A673 (cell line): ENCODE measurements at regions of chr3 and their contacts with region 1.

Region 1: DNA sequence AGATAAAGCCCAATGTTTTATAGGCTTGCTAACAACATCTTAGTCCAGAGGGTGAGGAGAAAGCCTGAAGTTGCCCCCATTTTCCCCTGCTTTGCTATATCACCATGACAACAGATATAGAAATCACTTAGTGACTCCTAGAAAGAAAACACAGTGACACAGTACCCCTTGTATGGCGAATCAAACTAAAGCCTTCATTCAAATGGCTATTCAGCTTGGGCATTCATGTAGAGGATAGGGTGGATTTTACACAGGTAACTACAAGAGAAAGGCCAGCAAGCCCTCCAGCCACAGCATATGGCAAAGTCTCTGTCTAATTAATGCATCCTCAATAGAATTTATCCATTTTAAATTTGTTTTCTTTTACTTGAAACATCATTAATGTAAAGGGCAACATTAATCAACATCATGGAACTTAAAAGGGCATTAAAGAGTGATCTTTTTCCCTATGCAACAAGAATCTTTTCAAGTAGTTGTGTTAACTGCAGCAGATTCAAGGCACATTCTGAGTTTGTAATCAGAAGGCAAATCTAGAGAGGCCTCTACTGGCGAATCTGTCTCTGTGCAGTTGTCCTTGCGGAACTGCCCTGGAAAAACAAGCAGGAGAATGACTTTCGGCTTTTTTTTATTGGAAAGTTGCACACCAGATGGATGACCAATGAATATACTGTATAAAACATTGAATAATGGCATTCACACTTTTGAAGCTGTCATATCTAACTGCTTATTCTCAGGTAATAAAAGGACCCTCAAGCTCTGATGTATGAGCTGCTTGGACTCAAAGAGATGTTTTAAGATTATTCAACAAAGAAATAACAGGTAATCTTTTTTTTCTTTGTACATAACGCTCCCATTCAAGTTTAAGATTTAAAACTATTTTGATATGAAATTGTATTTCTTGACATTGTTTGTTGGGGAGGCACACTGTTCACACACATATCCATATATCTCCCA is 621.7 kb upstream of the AGTR1 start:
- DNase-seq: peak; percentile 75
- H3K4me3 ChIP-seq: no peak overlapping the region
- H3K27ac ChIP-seq: no peak overlapping the region
- H3K4me1 ChIP-seq: peaks cover 38% of the 10 kb centered on the region
- H3K27me3 ChIP-seq: no peaks in the 10 kb centered on the region
- CTCF ChIP-seq: peak; percentile 87

Region 2: DNA sequence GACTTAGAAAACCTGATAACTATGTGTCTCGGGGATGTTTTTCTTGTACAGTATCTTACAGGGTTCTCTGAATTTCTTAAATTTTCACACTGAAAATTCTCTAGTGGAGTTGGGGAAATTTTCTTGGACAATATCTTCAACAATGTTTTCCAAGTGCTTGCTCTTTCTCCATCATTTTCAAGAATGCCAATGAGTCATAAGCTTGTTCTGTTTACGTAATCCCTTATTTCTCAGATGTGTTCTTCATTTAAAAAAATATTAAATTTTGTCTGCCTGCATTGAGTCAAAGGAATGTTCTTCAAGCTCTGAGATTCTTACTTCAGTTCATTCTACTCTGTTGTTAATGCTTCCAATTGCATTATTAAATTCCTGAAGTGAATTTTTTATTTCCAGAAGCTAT is 1584.7 kb before region 1 on chr3:
- CTCF ChIA-PET with region 1: no interaction called
- POLR2A ChIA-PET with region 1: no interaction called
- intact Hi-C with region 1: no loop called
- DNase-seq: no peak
- H3K4me3 ChIP-seq: no peak overlapping the region
- H3K27ac ChIP-seq: no peak overlapping the region
- H3K4me1 ChIP-seq: peaks cover 13% of the 10 kb centered on the region
- H3K27me3 ChIP-seq: no peaks in the 10 kb centered on the region
- CTCF ChIP-seq: no peak

Region 3: GRCh38 chr3:146747928-146748327 is 1328.1 kb before region 1 on chr3:
- CTCF ChIA-PET with region 1: interaction called, 3 read pairs
- POLR2A ChIA-PET with region 1: no interaction called
- intact Hi-C with region 1: loop called (anchors 5 kb)
- DNase-seq: peak; percentile 82
- H3K4me3 ChIP-seq: no peak overlapping the region
- H3K27ac ChIP-seq: no peak overlapping the region
- H3K4me1 ChIP-seq: peaks cover 37% of the 10 kb centered on the region
- H3K27me3 ChIP-seq: no peaks in the 10 kb centered on the region
- CTCF ChIP-seq: peak; percentile 76

Region 4: DNA sequence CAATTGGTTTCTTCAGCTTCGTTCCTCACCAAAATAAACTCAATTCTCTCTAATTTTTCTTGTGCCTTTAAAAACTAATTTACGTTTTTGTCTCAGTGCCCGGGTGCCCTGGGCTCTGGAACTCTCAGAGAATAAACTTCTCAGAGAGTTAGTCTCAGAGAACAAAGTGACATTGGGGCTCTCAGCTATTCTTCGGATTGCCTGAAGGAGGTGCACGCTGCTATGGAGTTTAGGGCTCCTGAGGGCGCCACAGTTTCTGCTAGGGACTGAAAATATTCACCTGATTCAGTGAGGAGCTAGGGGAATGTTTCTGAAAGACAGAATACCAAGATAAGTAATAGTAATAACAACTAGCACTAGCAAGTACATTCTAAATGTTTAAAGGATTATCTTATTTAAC is 692.4 kb before region 1 on chr3:
- CTCF ChIA-PET with region 1: no interaction called
- POLR2A ChIA-PET with region 1: no interaction called
- intact Hi-C with region 1: loop called (anchors 5 kb)
- DNase-seq: peak; percentile 51
- H3K4me3 ChIP-seq: no peak overlapping the region
- H3K27ac ChIP-seq: no peak overlapping the region
- H3K4me1 ChIP-seq: peaks cover 3% of the 10 kb centered on the region
- H3K27me3 ChIP-seq: peaks cover 59% of the 10 kb centered on the region
- CTCF ChIP-seq: peak; percentile 71

Region 5: GRCh38 chr3:147737376-147737775 is 338.7 kb before region 1 on chr3:
- CTCF ChIA-PET with region 1: no interaction called
- POLR2A ChIA-PET with region 1: no interaction called
- intact Hi-C with region 1: loop called (anchors 10 kb)
- DNase-seq: no peak
- H3K4me3 ChIP-seq: no peak overlapping the region
- H3K27ac ChIP-seq: no peak overlapping the region
- H3K4me1 ChIP-seq: no peaks in the 10 kb centered on the region
- H3K27me3 ChIP-seq: peaks cover 6% of the 10 kb centered on the region
- CTCF ChIP-seq: no peak

Region 6: DNA sequence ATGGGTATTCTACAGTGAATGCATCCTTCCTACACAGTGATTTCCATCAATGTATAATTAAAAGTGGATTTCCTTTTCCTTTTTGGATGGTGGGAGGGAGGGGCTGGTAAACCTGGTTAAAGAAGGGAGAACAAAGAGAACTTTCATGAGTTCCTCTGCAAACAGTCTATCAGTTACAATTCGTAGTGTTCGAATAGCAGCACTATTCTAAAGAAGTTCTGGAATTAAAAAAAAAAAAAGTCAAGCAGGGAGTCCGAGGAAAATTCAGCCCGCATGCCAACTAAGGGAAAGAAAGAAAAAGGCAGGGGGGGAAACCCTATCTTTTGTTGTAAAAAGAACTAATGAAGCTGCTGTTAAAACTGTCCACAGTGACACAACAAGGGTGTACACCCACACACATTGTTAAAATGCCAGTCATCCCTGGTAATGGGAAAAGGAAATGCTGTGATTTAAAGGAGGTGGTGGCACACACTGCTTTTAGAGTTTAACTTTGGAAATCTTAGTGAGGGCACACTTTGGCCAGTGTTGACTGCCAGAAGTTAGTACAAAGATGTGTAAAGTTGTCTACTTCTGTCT is 145.7 kb before region 1 on chr3:
- CTCF ChIA-PET with region 1: no interaction called
- POLR2A ChIA-PET with region 1: no interaction called
- intact Hi-C with region 1: loop called (anchors 5 kb)
- DNase-seq: peak; percentile 95
- H3K4me3 ChIP-seq: peak overlapping the region; percentile 11
- H3K27ac ChIP-seq: peak overlapping the region; percentile 64
- H3K4me1 ChIP-seq: peaks cover 50% of the 10 kb centered on the region
- H3K27me3 ChIP-seq: no peaks in the 10 kb centered on the region
- CTCF ChIP-seq: no peak